ENCODE measurements at regions of chr5 and their contacts with region 1.

Region 1: GRCh38 chr5:141430332-141431113 is at the start of gene PCDHGA12:
- DNase-seq: peak; percentile 63
- ATAC-seq: peak; percentile 83
- H3K4me3 Mint-ChIP-seq: peak within 1 kb of the TSS; percentile 35
- H3K27ac Mint-ChIP-seq: no peak within 1 kb of the TSS
- H3K4me1 Mint-ChIP-seq: peaks cover 5% of the 10 kb centered on the region
- H3K27me3 Mint-ChIP-seq: peaks cover 58% of the 10 kb centered on the region
- CTCF ChIP-seq: peak; percentile 36
- total RNA-seq, gene PCDHGA12: not detected

Region 2: GRCh38 chr5:140800816-140801493 is 629.6 kb before region 1 on chr5 and contains the start of gene PCDHA3:
- CTCF ChIA-PET with region 1: no interaction called
- POLR2A ChIA-PET with region 1: no interaction called
- intact Hi-C with region 1: no loop called
- DNase-seq: peak; percentile 9
- ATAC-seq: no peak
- H3K4me3 Mint-ChIP-seq: no peak within 1 kb of the TSS
- H3K27ac Mint-ChIP-seq: no peak within 1 kb of the TSS
- H3K4me1 Mint-ChIP-seq: no peaks in the 10 kb centered on the region
- H3K27me3 Mint-ChIP-seq: peaks cover 23% of the 10 kb centered on the region
- CTCF ChIP-seq: no peak
- total RNA-seq, gene PCDHA3: not detected

Region 3: DNA sequence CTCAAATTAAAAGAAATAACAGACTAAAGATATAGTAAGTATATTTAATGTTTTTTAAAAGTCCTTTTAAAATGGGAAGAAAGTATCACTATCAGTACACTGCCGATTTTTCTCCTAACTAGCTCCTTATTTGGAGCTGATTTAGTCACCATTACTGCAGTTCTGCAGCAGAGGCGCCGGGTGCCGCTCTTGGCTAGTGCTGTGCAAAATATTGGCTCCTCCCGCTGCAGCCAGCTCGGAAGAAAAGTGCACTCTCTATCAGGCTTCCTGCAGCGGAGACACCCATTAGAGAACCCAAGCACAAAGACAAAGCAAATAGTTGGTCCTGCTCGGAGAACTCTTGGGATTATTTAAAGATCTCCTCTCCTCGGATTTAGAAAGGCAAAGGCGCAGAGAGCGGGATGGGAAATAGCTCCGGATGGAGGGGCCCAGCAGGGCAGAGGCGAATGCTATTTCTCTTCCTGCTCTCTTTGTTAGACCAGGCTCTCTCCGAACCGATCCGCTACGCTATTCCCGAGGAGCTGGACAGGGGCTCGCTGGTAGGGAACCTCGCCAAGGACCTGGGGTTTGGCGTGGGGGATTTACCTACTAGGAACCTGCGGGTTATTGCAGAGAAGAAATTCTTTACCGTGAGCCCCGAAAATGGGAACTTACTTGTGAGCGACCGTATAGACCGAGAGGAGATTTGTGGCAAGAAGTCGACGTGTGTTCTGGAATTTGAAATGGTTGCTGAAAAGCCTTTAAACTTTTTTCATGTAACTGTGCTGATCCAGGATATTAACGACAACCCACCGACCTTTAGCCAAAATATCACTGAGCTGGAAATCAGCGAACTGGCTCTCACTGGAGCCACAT is 60.3 kb before region 1 on chr5 and contains the start of gene PCDHGB3:
- CTCF ChIA-PET with region 1: interaction called, 11 read pairs
- POLR2A ChIA-PET with region 1: no interaction called
- intact Hi-C with region 1: no loop called
- DNase-seq: peak; percentile 48
- ATAC-seq: peak; percentile 74
- H3K4me3 Mint-ChIP-seq: peak within 1 kb of the TSS; percentile 58
- H3K27ac Mint-ChIP-seq: no peak within 1 kb of the TSS
- H3K4me1 Mint-ChIP-seq: peaks cover 2% of the 10 kb centered on the region
- H3K27me3 Mint-ChIP-seq: peaks cover 67% of the 10 kb centered on the region
- CTCF ChIP-seq: peak; percentile 27
- total RNA-seq, gene PCDHGB3: 0.07 to 0.16 TPM

Region 4: GRCh38 chr5:141402553-141403260 is 27.8 kb before region 1 on chr5 and contains the start of gene PCDHGA9:
- CTCF ChIA-PET with region 1: interaction called, 13 read pairs
- POLR2A ChIA-PET with region 1: no interaction called
- intact Hi-C with region 1: no loop called
- DNase-seq: peak; percentile 42
- ATAC-seq: peak; percentile 42
- H3K4me3 Mint-ChIP-seq: no peak within 1 kb of the TSS
- H3K27ac Mint-ChIP-seq: no peak within 1 kb of the TSS
- H3K4me1 Mint-ChIP-seq: no peaks in the 10 kb centered on the region
- H3K27me3 Mint-ChIP-seq: peaks cover 62% of the 10 kb centered on the region
- CTCF ChIP-seq: peak; percentile 47
- total RNA-seq, gene PCDHGA9: 0.09 TPM in 1 of 2 experiments, not detected in the other

Region 5: GRCh38 chr5:141484641-141485311 is 54.3 kb after region 1 on chr5 and contains the start of gene PCDHGC4:
- CTCF ChIA-PET with region 1: interaction called, 11 read pairs
- POLR2A ChIA-PET with region 1: no interaction called
- intact Hi-C with region 1: no loop called
- DNase-seq: no peak
- ATAC-seq: no peak
- H3K4me3 Mint-ChIP-seq: peak within 1 kb of the TSS; percentile 11
- H3K27ac Mint-ChIP-seq: no peak within 1 kb of the TSS
- H3K4me1 Mint-ChIP-seq: peaks cover 9% of the 10 kb centered on the region
- H3K27me3 Mint-ChIP-seq: peaks cover 75% of the 10 kb centered on the region
- CTCF ChIP-seq: no peak
- total RNA-seq, gene PCDHGC4: not detected